Activated CD8-positive, alpha-beta T cell treated with anti-CD3 and anti-CD28 coated beads for 36 hours (primary cell): ENCODE measurements at regions of chr17 and their contacts with region 1.

Region 1: GRCh38 chr17:49031965-49032928 is 35.1 kb downstream of the IGF2BP1 start:
- DNase-seq: peak; percentile 60
- ATAC-seq: peak; percentile 91
- H3K4me3 Mint-ChIP-seq: no peak overlapping the region
- H3K27ac Mint-ChIP-seq: no peak overlapping the region
- H3K4me1 Mint-ChIP-seq: no peaks in the 10 kb centered on the region
- H3K27me3 Mint-ChIP-seq: no peaks in the 10 kb centered on the region
- CTCF ChIP-seq: peak; percentile 79

Region 2: DNA sequence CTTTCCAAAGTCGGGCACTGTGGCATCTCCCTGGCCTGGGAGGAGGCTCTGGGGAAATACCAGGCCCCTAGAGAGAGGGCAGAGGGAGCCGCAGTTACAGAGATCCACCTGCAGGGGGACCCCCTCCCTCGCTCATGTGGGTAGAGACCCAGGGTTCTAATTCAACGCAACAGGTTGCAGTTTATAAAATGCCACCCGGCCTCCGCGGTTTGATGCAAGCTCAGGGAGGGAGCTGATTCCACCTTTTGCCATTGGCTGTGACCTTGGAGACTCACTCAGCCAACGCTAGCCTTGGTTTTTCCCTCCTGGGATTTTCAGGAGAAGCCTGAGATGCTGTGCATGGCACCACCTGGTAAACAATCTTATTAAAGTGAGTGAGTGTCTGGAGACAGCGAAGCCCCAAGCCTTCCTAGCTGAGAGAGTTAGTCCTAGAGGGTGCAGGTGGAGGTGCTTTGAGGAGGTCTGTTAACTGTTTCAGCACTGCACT is 227.3 kb before region 1 on chr17:
- CTCF ChIA-PET with region 1: interaction called, 10 read pairs
- POLR2A ChIA-PET with region 1: no interaction called
- intact Hi-C with region 1: loop called (anchors 10 kb)
- DNase-seq: peak; percentile 75
- ATAC-seq: peak; percentile 100
- H3K4me3 Mint-ChIP-seq: no peak overlapping the region
- H3K27ac Mint-ChIP-seq: no peak overlapping the region
- H3K4me1 Mint-ChIP-seq: no peaks in the 10 kb centered on the region
- H3K27me3 Mint-ChIP-seq: peaks cover 6% of the 10 kb centered on the region
- CTCF ChIP-seq: peak; percentile 98

Region 3: DNA sequence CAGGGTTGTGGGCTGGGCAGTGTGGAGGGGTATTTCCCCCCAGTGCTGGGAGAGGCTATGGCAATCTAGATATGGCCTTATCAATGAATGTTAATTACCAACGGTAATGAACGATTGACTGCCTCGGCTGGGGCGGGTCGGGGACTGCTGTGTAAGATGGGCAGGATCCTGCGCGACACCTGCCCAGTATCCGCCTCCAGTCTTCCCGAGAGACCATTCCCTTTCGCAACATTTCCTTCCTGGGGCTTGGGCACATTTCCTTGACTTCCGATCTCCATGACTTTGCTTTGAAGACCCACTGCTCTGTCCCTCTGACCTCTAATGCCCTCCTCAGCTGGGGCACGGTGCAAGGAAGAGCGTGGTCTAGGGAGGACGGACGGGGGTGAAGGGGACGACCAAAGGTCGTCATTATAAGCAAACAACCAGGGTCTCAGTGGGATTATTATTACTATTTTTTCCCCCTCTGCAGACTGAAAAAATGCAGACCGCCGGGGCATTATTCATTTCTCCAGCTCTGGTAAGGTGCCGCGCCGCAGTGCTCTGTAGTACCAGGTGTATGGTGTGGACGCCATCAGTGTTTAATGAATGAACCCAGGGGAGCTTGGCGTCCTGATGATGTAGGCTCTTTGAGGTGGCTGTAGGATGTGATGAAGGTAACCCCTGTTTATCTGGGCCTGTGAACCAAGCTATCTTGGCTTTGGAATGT is 139.2 kb before region 1 on chr17:
- CTCF ChIA-PET with region 1: interaction called, 16 read pairs
- POLR2A ChIA-PET with region 1: no interaction called
- intact Hi-C with region 1: loop called (anchors 5 kb)
- DNase-seq: peak; percentile 38
- ATAC-seq: no peak
- H3K4me3 Mint-ChIP-seq: peak overlapping the region; percentile 94
- H3K27ac Mint-ChIP-seq: peak overlapping the region; percentile 98
- H3K4me1 Mint-ChIP-seq: peaks cover 26% of the 10 kb centered on the region
- H3K27me3 Mint-ChIP-seq: no peaks in the 10 kb centered on the region
- CTCF ChIP-seq: no peak

Region 4: GRCh38 chr17:48961516-48962233 is 70.6 kb before region 1 on chr17:
- CTCF ChIA-PET with region 1: interaction called, 8 read pairs
- POLR2A ChIA-PET with region 1: no interaction called
- intact Hi-C with region 1: loop called (anchors 10 kb)
- DNase-seq: no peak
- ATAC-seq: no peak
- H3K4me3 Mint-ChIP-seq: no peak overlapping the region
- H3K27ac Mint-ChIP-seq: no peak overlapping the region
- H3K4me1 Mint-ChIP-seq: no peaks in the 10 kb centered on the region
- H3K27me3 Mint-ChIP-seq: peaks cover 29% of the 10 kb centered on the region
- CTCF ChIP-seq: no peak

Region 5: DNA sequence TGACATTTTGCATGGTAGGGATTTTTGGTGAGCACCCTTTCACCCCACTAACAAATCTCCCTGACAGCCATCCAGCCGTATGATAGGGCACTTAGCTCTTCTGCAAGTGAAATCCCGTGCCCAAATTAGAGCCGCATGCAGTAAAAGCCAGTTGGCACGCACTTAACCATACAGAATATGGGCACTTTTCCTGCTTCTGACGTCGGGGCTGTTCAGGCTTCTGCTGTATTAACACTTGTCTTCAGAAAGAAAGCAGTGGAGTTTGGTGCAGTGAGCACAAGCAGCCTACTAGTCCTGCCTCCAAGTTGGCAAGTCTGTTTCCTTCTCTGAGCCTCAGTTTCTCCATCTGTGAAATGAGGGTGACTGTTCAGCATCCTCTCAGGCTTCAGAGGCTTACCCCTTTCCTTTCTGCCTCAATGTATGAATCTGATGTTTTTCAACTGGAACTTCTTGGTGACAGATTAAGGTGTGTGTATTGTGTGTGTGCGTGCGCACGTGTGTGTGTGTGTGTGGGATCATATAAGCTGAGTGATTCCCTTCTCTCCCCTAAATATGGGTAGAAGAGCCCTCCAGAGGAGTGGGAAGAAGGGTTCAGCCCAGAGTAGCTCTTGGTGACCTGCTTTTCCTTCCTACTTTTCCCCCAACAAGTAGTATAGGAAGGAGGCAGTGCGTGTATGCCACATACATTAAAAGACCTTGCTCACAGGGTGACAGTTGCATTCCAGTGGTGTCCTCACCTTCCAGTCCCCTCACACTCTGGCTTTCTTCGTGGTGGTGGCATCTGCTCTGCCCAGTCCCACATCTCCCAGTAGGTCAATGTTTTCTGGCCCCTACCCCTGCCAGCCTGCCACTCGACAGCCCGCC is 16.1 kb before region 1 on chr17:
- CTCF ChIA-PET with region 1: interaction called, 16 read pairs
- POLR2A ChIA-PET with region 1: no interaction called
- intact Hi-C with region 1: no loop called
- DNase-seq: no peak
- ATAC-seq: no peak
- H3K4me3 Mint-ChIP-seq: no peak overlapping the region
- H3K27ac Mint-ChIP-seq: no peak overlapping the region
- H3K4me1 Mint-ChIP-seq: no peaks in the 10 kb centered on the region
- H3K27me3 Mint-ChIP-seq: peaks cover 44% of the 10 kb centered on the region
- CTCF ChIP-seq: no peak